ENCODE measurements at regions of chr14 and their contacts with region 1.

Region 1: GRCh38 chr14:52552063-52552988 is at the starts of genes GPR137C and TXNDC16:
- DNase-seq: peak; percentile 98
- H3K4me3 Mint-ChIP-seq: peak within 1 kb of the TSS; percentile 93
- H3K27ac Mint-ChIP-seq: peak within 1 kb of the TSS; percentile 81
- H3K4me1 Mint-ChIP-seq: peaks cover 17% of the 10 kb centered on the region
- H3K27me3 Mint-ChIP-seq: no peaks in the 10 kb centered on the region
- CTCF ChIP-seq: no peak
- total RNA-seq, gene GPR137C: 2.0 and 2.3 TPM in 2 replicates
- total RNA-seq, gene TXNDC16: 3.5 and 4.0 TPM in 2 replicates

Region 2: DNA sequence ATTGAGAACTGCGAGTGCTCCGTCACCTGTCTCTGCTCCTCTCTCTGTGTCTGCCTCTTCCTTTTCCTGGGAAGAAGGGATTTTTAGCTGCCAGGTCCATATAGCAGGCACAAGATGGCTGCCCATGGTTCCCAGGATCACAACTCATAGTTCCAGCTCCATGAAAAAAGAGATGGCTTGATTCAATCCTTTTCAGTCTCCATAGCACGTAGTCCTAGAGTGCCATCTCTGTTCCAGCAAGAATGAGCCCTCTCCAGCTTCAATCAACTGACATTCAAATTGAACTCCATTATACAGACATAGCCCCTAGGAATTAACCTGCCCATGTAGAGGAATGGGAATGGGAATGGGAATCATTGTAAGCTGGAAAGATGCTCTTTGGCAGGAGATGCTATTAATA is 597.7 kb before region 1 on chr14:
- CTCF ChIA-PET with region 1: no interaction called
- intact Hi-C with region 1: no loop called
- DNase-seq: no peak
- H3K4me3 Mint-ChIP-seq: no peak overlapping the region
- H3K27ac Mint-ChIP-seq: no peak overlapping the region
- H3K4me1 Mint-ChIP-seq: no peaks in the 10 kb centered on the region
- H3K27me3 Mint-ChIP-seq: peaks cover 87% of the 10 kb centered on the region
- CTCF ChIP-seq: no peak

Region 3: DNA sequence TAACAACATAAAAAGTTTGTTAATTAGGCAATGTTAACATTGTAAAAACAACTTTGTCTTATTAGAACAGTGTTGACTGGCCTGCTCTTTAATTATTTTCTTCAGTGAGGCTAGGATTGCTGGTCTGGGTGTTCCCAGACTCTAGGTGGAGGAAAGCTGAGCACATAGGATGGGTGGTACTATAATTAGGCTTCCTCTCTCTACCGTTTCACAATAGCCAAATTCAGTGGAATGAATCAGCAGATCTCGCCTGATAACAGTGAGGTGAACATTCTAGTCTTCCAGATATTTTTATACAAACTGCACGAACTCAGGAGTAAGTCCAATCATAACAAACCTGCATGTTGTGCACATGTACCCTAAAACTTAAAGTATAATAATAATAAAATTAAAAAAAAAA is 272.9 kb before region 1 on chr14:
- CTCF ChIA-PET with region 1: no interaction called
- intact Hi-C with region 1: no loop called
- DNase-seq: no peak
- H3K4me3 Mint-ChIP-seq: no peak overlapping the region
- H3K27ac Mint-ChIP-seq: no peak overlapping the region
- H3K4me1 Mint-ChIP-seq: no peaks in the 10 kb centered on the region
- H3K27me3 Mint-ChIP-seq: no peaks in the 10 kb centered on the region
- CTCF ChIP-seq: no peak

Region 4: GRCh38 chr14:52602131-52602530 is 49.8 kb after region 1 on chr14:
- CTCF ChIA-PET with region 1: no interaction called
- intact Hi-C with region 1: no loop called
- DNase-seq: no peak
- H3K4me3 Mint-ChIP-seq: no peak overlapping the region
- H3K27ac Mint-ChIP-seq: no peak overlapping the region
- H3K4me1 Mint-ChIP-seq: no peaks in the 10 kb centered on the region
- H3K27me3 Mint-ChIP-seq: no peaks in the 10 kb centered on the region
- CTCF ChIP-seq: no peak

Region 5: GRCh38 chr14:52706724-52707706 is 154.7 kb after region 1 on chr14 and contains the start of gene PSMC6:
- CTCF ChIA-PET with region 1: interaction called, 6 read pairs
- intact Hi-C with region 1: loop called (anchors 10 kb)
- DNase-seq: peak; percentile 93
- H3K4me3 Mint-ChIP-seq: peak within 1 kb of the TSS; percentile 95
- H3K27ac Mint-ChIP-seq: peak within 1 kb of the TSS; percentile 97
- H3K4me1 Mint-ChIP-seq: peaks cover 13% of the 10 kb centered on the region
- H3K27me3 Mint-ChIP-seq: no peaks in the 10 kb centered on the region
- CTCF ChIP-seq: no peak
- total RNA-seq, gene PSMC6: 104 TPM in 2 replicates

Region 6: GRCh38 chr14:52789118-52789517 is 236.8 kb after region 1 on chr14:
- CTCF ChIA-PET with region 1: no interaction called
- intact Hi-C with region 1: loop called (anchors 10 kb)
- DNase-seq: no peak
- H3K4me3 Mint-ChIP-seq: peak overlapping the region; percentile 88
- H3K27ac Mint-ChIP-seq: peak overlapping the region; percentile 98
- H3K4me1 Mint-ChIP-seq: peaks cover 6% of the 10 kb centered on the region
- H3K27me3 Mint-ChIP-seq: no peaks in the 10 kb centered on the region
- CTCF ChIP-seq: no peak

Region 7: GRCh38 chr14:52950898-52951689 is 398.8 kb after region 1 on chr14 and contains the start of gene FERMT2:
- CTCF ChIA-PET with region 1: no interaction called
- intact Hi-C with region 1: loop called (anchors 10 kb)
- DNase-seq: peak; percentile 91
- H3K4me3 Mint-ChIP-seq: peak within 1 kb of the TSS; percentile 94
- H3K27ac Mint-ChIP-seq: peak within 1 kb of the TSS; percentile 84
- H3K4me1 Mint-ChIP-seq: peaks cover 10% of the 10 kb centered on the region
- H3K27me3 Mint-ChIP-seq: no peaks in the 10 kb centered on the region
- CTCF ChIP-seq: no peak
- total RNA-seq, gene FERMT2: 21.0 and 21.6 TPM in 2 replicates